Sciatic nerve (tissue), 2 donors: ENCODE measurements at regions of chr14 and their contacts with region 1.

Region 1: GRCh38 chr14:102275866-102276265 is 29.1 kb downstream of the MOK start:
- DNase-seq: no peak
- ATAC-seq: no peak

Region 2: GRCh38 chr14:102139248-102140026 is 136.4 kb before region 1 on chr14 and contains the start of gene WDR20:
- intact Hi-C with region 1: no loop called
- DNase-seq: peak; percentile 99
- ATAC-seq: peak; percentile 100
- total RNA-seq, gene WDR20: 39.6 TPM

Region 3: GRCh38 chr14:102241147-102241546 is 34.7 kb before region 1 on chr14:
- intact Hi-C with region 1: loop called (anchors 1 kb)
- DNase-seq: no peak
- ATAC-seq: no peak